Heart right ventricle (tissue), 16 donors: ENCODE measurements at regions of chr1 and their contacts with region 1.

Region 1: GRCh38 chr1:229822026-229822425 is 196.0 kb downstream of the URB2 start:
- DNase-seq: no peak
- ATAC-seq: no peak
- H3K4me3 ChIP-seq: no peak overlapping the region
- H3K27ac ChIP-seq: no peak overlapping the region
- H3K4me1 ChIP-seq: no peaks in the 10 kb centered on the region
- H3K27me3 ChIP-seq: peaks cover 0 to 9% (median 0%) of the 10 kb centered on the region in 7 donors
- CTCF ChIP-seq: no peak

Region 2: GRCh38 chr1:230251644-230252191 is 429.7 kb after region 1 on chr1:
- intact Hi-C with region 1: loop called in 1 of 10 experiments (anchors 10 kb)
- DNase-seq: no peak
- ATAC-seq: no peak
- H3K4me3 ChIP-seq: no peak overlapping the region
- H3K27ac ChIP-seq: no peak overlapping the region
- H3K4me1 ChIP-seq: peaks cover 0 to 6% (median 0%) of the 10 kb centered on the region in 9 donors
- H3K27me3 ChIP-seq: no peaks in the 10 kb centered on the region
- CTCF ChIP-seq: no peak